MCF 10A (cell line): ENCODE measurements at regions of chr12 and their contacts with region 1.

Region 1: DNA sequence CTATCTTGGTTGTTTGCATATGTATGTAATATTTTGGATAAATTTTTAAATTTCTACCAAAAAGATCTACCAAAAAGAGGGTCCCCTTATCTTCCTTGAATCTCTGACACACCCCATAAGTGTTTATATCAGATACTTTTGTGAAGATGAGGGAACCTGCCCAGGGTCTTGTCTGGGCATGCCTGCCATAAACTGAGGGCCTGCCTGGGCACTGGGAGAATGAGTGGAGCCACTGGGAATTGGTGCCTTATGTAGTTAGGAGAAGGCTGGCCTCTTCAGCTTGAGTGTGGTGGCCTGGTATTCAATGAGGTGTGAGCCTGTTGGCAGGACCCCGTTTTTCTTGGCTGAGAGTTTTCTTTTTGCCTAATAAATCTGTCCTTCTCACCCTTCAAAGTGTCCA is 46.5 kb downstream of the OR9K2 start:
- DNase-seq: no peak
- H3K4me3 Mint-ChIP-seq: no peak overlapping the region
- H3K27ac Mint-ChIP-seq: peak overlapping the region; percentile 2
- H3K4me1 Mint-ChIP-seq: no peaks in the 10 kb centered on the region
- H3K27me3 Mint-ChIP-seq: peaks cover 24% of the 10 kb centered on the region
- CTCF ChIP-seq: no peak

Region 2: GRCh38 chr12:55188974-55189556 is 16.4 kb after region 1 on chr12:
- CTCF ChIA-PET with region 1: interaction called, 13 read pairs
- POLR2A ChIA-PET with region 1: interaction called, 4 read pairs
- intact Hi-C with region 1: no loop called
- DNase-seq: peak; percentile 79
- H3K4me3 Mint-ChIP-seq: no peak overlapping the region
- H3K27ac Mint-ChIP-seq: no peak overlapping the region
- H3K4me1 Mint-ChIP-seq: no peaks in the 10 kb centered on the region
- H3K27me3 Mint-ChIP-seq: peaks cover 71% of the 10 kb centered on the region
- CTCF ChIP-seq: peak; percentile 47